Activated T-helper 2 cell treated with anti-CD3 and anti-CD28 coated beads, Interferon-gamma antibody, Interleukin-2, Interleukin-4, amounts not matched to agents 10 μg/mL and 5 μg/mL and 100 μg/mL, durations not matched to agents 14 hours and 24 hours and 36 hours (primary cell): ENCODE measurements at regions of chr1 and their contacts with region 1.

Region 1: DNA sequence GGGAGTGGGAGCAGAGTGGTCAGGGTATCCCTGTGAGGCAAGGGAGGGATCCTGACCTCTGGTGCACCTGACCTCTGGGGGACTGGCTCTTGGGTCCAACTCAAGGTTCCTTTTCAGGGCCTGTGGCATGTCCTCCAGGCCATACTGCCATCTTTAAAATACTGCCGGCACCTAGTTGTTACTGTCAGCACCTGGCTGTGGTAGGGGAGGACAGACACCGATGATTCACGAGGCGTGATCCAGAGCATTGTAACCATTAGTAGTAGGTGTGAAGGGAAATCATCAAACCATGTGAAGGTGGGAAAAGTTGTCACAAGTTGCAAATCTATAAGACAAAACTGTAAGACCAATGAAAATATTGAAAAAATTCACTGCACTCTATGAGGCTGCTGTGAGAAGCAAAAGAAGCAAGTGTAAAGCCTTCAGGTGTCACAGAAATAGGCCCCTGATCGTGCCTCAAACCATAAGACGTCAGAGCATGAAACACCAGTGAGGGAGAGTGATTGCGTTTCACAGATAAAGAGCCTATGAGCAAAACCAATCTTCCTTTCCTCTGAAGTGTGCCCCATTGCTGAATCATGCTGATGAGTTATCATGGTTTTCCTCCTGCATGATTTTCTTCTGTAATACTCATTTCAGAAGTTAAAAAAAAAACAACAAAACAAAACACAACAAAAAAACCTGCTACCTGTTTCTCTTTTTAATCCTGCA is 55.3 kb downstream of the CDC7 start:
- DNase-seq: peak; percentile 77
- H3K4me3 Mint-ChIP-seq: peak overlapping the region; percentile 53
- H3K27ac Mint-ChIP-seq: peak overlapping the region; percentile 93
- H3K4me1 Mint-ChIP-seq: peaks cover 86% of the 10 kb centered on the region
- H3K27me3 Mint-ChIP-seq: no peaks in the 10 kb centered on the region

Region 2: GRCh38 chr1:91440845-91441244 is 115.1 kb before region 1 on chr1:
- intact Hi-C with region 1: no loop called
- DNase-seq: no peak
- H3K4me3 Mint-ChIP-seq: no peak overlapping the region
- H3K27ac Mint-ChIP-seq: no peak overlapping the region
- H3K4me1 Mint-ChIP-seq: no peaks in the 10 kb centered on the region
- H3K27me3 Mint-ChIP-seq: peaks cover 22% of the 10 kb centered on the region

Region 3: GRCh38 chr1:91523482-91523881 is 32.5 kb before region 1 on chr1:
- intact Hi-C with region 1: loop called (anchors 1 kb)
- DNase-seq: no peak
- H3K4me3 Mint-ChIP-seq: no peak overlapping the region
- H3K27ac Mint-ChIP-seq: peak overlapping the region; percentile 38
- H3K4me1 Mint-ChIP-seq: peaks cover 47% of the 10 kb centered on the region
- H3K27me3 Mint-ChIP-seq: no peaks in the 10 kb centered on the region

Region 4: DNA sequence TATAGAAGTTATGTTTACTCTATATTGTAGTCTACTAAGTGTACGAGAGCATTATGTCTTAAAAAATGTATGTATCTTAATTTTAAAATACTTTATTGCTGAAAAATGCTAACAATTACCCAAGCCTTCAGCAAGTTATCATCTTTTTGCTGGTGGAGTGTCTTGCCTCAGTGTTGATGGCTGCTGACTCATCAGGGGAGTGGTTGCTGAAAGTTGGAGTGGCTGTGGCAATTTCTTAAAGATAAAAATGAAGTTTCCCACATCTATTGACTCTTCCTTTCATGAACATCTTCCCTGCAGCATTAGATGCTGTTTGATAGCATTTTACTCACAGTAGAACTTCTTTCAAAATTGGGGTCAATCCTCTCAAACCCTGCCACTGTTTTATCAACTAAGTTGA is 40.5 kb after region 1 on chr1:
- intact Hi-C with region 1: loop called (anchors 1 kb)
- DNase-seq: no peak
- H3K4me3 Mint-ChIP-seq: no peak overlapping the region
- H3K27ac Mint-ChIP-seq: peak overlapping the region; percentile 11
- H3K4me1 Mint-ChIP-seq: peaks cover 39% of the 10 kb centered on the region
- H3K27me3 Mint-ChIP-seq: peaks cover 2% of the 10 kb centered on the region

Region 5: GRCh38 chr1:91697416-91697815 is 141.4 kb after region 1 on chr1:
- intact Hi-C with region 1: loop called (anchors 1 kb)
- DNase-seq: peak; percentile 73
- H3K4me3 Mint-ChIP-seq: peak overlapping the region; percentile 61
- H3K27ac Mint-ChIP-seq: peak overlapping the region; percentile 89
- H3K4me1 Mint-ChIP-seq: peaks cover 61% of the 10 kb centered on the region
- H3K27me3 Mint-ChIP-seq: no peaks in the 10 kb centered on the region

Region 6: DNA sequence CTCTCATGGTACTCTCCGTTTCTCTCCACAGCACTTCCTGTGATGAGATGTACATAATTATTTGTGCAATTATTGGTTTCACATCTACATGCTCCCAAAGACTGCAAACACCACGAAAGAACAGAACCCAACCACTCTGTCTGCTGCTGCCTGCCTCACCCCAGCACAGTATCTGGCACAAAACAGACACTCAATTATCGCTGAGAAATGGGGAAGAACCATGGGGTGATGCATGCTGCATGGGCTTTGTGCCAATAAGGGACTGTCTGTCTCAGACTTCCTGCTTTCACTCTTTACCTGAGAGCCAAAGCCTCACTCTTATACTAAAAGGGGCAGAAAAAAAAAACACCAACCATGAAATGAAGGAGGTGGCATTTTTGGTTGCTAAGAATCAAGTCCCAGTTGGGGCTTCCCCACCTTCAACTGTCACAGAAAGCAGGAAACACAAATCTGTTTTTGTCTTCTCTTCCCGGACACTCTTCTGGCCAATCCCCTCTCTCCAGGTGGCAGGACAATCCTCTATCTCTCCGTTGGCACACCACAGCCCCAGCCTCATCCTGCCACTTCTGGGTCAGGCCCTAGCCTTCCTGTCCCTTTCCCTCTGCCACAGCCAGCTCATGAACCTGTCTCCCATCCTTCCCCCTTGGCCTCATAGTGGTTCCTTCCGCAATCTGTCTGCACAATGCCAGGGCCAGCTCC is 248.0 kb after region 1 on chr1:
- intact Hi-C with region 1: loop called (anchors 1 kb)
- DNase-seq: peak; percentile 66
- H3K4me3 Mint-ChIP-seq: peak overlapping the region; percentile 74
- H3K27ac Mint-ChIP-seq: peak overlapping the region; percentile 93
- H3K4me1 Mint-ChIP-seq: peaks cover 52% of the 10 kb centered on the region
- H3K27me3 Mint-ChIP-seq: peaks cover 8% of the 10 kb centered on the region

Region 7: GRCh38 chr1:91830242-91831131 is 274.5 kb after region 1 on chr1:
- intact Hi-C with region 1: no loop called
- DNase-seq: no peak
- H3K4me3 Mint-ChIP-seq: no peak overlapping the region
- H3K27ac Mint-ChIP-seq: peak overlapping the region; percentile 30
- H3K4me1 Mint-ChIP-seq: peaks cover 21% of the 10 kb centered on the region
- H3K27me3 Mint-ChIP-seq: no peaks in the 10 kb centered on the region